Mammary epithelial cell (primary cell): ENCODE measurements at regions of chr9 and their contacts with region 1.

Region 1: GRCh38 chr9:127802576-127803443 is at the start of gene FPGS:
- DNase-seq: peak; percentile 82
- H3K4me3 ChIP-seq: peak within 1 kb of the TSS; percentile 72 to 93 (median 77)
- H3K27ac ChIP-seq: peak within 1 kb of the TSS; percentile 98
- H3K4me1 ChIP-seq: peaks cover 25% of the 10 kb centered on the region
- H3K27me3 ChIP-seq: no peaks in the 10 kb centered on the region
- CTCF ChIP-seq: no peak
- total RNA-seq, gene FPGS: 59.5 to 85.8 TPM

Region 2: DNA sequence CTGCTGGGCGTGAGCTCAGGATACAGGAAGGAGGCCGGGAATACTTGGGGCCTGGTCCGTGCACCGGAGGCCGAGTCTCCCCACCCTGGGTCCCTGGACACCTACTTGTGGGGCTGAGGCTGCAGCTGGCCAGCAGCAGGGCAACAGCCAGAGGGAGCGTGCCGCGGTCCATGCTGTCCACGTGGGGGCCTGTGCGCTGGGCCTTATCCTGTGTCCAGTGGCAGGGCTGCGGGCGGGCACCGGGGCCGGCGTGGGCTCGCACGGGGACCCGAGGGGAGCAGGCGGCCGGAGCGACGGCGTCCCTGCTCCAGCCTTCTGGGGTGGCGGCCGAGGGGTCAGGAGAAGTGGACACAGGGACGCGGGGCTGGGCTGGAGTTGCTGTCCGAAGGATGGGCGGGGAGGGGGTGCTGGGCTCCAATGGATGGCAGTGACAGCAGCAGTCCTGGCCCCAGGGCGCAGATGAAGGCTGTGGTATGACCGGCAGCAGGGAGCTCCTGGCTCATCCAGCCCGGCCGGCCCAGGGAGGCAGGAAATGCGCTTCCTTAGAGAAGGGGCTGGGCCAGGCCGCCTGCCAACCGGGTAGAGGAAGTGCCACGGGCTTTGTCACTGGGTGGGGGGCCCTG is 51.5 kb after region 1 on chr9 and contains the start of gene ENG:
- CTCF ChIA-PET with region 1: no interaction called
- dilution Hi-C with region 1: no loop called
- in situ Hi-C with region 1: no loop called
- intact Hi-C with region 1: loop called (anchors 5 kb)
- DNase-seq: peak; percentile 38
- H3K4me3 ChIP-seq: peak within 1 kb of the TSS; percentile 46 to 85 (median 69)
- H3K27ac ChIP-seq: peak within 1 kb of the TSS; percentile 51
- H3K4me1 ChIP-seq: peaks cover 7% of the 10 kb centered on the region
- H3K27me3 ChIP-seq: no peaks in the 10 kb centered on the region
- CTCF ChIP-seq: peak in 1 of 2 donors; percentile 23
- total RNA-seq, gene ENG: 4.0 to 32.2 TPM

Region 3: DNA sequence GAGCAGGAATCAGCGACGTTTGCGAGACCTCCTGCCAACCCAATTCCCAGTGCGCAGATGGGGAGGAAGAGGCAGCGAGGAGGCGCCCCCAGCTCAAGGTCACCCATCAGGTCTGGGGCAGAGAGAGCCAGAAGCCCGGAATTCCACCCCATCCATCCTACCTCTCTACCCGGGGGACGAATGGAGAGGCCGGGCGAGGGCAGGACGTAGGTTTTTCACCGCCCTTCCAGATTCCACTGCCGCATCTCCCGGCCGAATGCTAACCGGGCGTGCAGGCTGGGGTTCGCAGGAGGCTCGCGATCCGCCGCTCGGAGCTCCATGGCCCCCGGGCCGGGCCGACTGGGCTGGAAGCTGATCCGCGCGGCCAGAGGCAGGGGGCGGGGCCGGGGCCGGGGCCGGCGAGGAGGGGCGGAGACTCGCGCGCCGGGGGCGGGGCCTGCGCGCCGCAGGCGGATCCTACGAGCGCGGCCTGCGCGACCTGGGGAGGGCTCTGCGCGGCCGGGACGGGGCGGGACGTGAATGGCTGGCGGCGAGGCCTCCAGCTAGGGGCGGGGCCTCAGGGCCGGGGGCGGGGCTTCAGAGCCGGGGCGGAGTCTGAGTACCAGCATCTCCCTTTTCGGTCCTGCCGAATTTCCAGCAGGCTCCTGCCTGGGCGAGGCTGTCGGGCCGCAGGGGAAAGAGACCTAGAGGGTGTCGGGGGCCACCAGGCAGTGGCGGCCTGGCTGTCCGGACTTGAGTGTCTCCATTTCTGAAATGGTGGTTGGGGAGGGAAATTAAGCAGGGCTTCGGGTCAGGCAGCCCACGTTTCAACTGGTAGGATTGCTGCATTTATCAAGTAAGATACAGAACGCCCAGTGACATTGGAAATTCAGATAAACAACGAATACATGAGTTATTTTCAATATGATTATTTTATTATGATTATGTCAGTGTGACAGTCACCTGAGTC is 114.1 kb after region 1 on chr9 and contains the start of gene ST6GALNAC4:
- CTCF ChIA-PET with region 1: no interaction called
- dilution Hi-C with region 1: no loop called
- in situ Hi-C with region 1: no loop called
- intact Hi-C with region 1: loop called (anchors 5 kb)
- DNase-seq: peak; percentile 76
- H3K4me3 ChIP-seq: peak within 1 kb of the TSS; percentile 35 to 62 (median 58)
- H3K27ac ChIP-seq: peak within 1 kb of the TSS; percentile 16
- H3K4me1 ChIP-seq: peaks cover 38% of the 10 kb centered on the region
- H3K27me3 ChIP-seq: no peaks in the 10 kb centered on the region
- CTCF ChIP-seq: no peak
- total RNA-seq, gene ST6GALNAC4: 14.3 to 19.6 TPM

Region 4: DNA sequence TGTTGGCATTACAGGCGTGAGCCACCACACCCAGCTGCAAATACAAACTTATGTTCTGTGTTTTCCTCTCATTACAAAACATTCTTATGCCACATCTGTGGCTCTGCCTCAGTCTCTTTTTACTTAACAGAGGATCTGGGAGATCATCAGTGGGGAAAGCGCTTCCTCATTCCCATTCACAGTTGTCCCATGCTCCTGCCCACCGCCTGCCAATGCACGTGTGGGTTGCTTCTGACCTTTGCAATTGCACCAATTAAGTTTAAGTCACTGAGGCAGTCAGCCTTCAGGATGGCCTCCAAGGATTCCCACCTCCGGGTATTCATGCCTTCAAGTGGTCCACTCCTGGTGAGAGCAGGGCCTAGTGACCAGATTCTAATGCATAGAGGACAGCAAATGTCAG is 212.9 kb after region 1 on chr9:
- CTCF ChIA-PET with region 1: no interaction called
- dilution Hi-C with region 1: no loop called
- in situ Hi-C with region 1: no loop called
- intact Hi-C with region 1: no loop called
- DNase-seq: no peak
- H3K4me3 ChIP-seq: no peak overlapping the region
- H3K27ac ChIP-seq: no peak overlapping the region
- H3K4me1 ChIP-seq: no peaks in the 10 kb centered on the region
- H3K27me3 ChIP-seq: no peaks in the 10 kb centered on the region
- CTCF ChIP-seq: no peak

Region 5: DNA sequence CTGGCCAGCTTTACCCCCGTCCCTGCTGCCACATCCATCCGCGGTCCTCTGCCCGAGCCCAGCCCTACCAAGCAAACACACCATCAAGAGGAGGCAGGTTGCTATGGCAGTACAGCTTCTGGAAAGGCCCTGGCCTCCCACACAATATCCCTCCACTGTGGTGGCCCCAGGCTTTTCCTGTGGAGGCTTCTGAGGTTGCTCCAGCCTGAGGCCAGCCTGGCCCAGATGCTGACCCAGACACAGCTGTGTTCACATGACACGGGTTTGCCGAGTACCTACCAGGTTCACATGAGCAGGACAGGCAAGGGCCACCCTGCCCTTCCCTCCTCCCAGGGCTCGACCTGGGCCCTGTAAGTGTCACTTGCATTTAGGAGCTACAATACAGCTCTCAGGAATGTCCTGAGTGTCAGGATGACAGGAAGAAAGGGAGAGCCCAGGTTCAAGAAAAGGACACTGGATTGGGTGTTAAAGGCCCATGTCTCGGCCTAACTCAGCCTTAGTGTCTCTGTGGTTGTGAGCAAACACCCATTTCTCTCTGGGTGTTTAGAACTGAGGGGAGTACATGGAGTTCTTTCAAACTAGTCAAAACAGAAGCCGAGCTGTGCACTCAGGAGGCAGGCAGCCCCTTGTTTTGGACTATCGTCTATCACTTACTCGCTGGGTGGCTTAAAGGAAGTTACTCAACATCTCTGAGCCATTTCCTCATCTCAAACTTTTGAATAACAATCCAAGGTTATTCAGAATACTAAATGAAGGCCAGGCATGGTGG is 224.1 kb after region 1 on chr9:
- CTCF ChIA-PET with region 1: interaction called, 10 read pairs
- dilution Hi-C with region 1: no loop called
- in situ Hi-C with region 1: no loop called
- intact Hi-C with region 1: no loop called
- DNase-seq: peak; percentile 21
- H3K4me3 ChIP-seq: no peak overlapping the region
- H3K27ac ChIP-seq: no peak overlapping the region
- H3K4me1 ChIP-seq: no peaks in the 10 kb centered on the region
- H3K27me3 ChIP-seq: no peaks in the 10 kb centered on the region
- CTCF ChIP-seq: no peak